ENCODE measurements at regions of chr10 and their contacts with region 1.

Region 1: DNA sequence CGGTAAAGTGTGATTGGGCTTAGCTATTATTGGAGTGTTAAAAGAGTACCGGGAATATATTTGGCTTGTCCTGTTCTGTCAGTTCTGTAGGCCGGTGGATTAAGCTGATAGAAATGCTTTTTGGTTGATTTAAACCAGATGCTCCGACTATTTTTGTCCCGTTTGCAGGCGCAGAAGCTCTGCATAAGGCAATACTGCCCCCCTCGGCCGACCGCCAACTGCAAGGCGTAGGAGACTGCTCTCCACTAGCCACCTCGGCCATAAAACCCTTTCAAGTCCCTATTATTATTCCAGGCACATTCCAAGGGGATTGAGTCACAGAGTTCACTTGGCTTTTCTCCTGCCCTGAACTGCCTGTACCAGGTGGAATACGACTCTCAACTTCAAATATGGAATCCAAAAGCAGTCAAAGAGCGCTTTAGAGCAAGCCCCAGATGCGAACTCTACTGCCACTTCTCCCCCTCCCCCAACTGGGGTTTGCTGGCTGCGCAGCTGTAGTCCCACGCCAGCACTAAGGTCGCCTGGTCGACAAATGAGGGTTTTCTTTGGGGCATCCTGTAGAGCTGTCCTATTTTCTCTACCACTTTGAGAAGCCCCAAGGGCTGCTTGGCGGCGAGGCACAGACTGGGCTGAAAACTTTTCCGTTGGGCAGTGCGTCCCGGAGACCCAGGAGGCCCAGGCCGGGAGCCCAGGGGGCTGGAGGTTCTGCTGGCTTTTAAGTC is 108.3 kb downstream of the REEP3 start:
- H3K4me3 ChIP-seq: peak overlapping the region; percentile 59
- H3K27ac ChIP-seq: peak overlapping the region; percentile 100
- H3K4me1 ChIP-seq: peaks cover 16% of the 10 kb centered on the region
- CTCF ChIP-seq: peak; percentile 92

Region 2: DNA sequence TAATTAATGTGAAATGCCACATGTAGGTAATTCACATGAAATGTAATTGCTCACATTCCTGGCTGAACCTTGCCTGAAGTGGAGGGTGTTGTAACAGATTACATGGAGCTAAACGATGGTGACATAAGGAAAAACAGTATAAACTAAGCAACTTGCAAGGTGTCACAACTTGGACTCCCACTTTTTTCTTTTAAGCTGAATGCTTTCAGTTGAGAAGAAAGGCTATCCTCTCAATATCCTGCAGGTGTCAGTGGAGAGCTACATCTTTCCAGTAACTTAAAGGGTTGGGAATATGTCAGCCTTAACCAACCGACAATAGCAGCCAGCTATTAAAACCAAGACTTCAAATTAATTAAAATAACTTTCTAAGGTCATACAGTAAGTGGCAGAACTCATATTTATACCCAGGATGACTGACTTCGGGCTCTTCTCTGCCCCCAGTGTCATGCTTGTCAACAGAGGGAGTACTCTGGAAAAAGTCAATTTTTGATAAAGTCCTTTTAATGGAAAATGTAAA is 462.7 kb before region 1 on chr10:
- CTCF ChIA-PET with region 1: interaction called, 16 read pairs
- POLR2A ChIA-PET with region 1: interaction called, 10 read pairs
- H3K4me3 ChIP-seq: no peak overlapping the region
- H3K27ac ChIP-seq: no peak overlapping the region
- H3K4me1 ChIP-seq: peaks cover 8% of the 10 kb centered on the region
- CTCF ChIP-seq: no peak; the same call in 1 of the 2 replicates

Region 3: DNA sequence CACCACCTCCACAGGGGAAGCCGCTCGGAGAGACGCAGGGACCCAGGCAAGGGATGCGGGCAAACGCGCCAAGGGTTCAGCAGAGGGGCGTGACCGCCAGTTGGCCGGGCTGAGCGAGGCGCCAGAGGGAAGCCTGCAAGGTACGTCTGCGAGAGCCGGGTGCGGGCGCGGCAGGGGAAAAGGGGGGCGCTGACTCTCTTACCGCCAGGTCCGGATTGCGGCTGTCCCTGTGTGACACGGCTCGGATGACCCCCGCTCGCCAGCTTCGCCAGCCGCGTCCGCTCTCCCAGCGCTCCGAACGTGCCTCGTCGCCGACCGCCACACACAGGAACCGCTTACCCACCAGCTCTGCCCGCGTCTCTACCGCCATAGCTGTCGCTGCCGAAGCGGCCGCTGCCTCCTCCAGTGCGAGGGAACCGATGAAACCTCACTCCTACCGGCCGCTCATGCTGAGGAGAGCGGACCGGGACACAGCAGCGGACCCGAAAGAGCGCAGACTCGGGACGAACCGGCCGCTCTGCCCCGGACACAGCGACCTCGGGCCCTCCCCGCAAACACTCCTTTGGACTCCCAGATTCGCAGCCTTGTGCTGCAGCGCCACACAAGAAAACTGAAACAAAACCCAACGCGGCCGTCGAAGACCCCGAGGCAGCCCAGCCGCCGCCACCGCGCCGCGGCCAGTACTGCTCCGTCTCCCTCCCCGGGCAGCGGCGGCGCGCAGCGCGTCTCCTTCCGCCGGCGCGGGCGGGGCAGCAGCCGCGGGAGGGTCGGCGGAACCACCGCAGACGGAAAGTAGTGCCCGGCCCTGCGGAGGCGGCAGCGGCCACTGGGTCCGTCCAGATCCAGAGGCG is 164.0 kb before region 1 on chr10 and contains the start of gene JMJD1C:
- CTCF ChIA-PET with region 1: interaction called, 5 read pairs
- POLR2A ChIA-PET with region 1: interaction called, 26 read pairs
- H3K4me3 ChIP-seq: peak within 1 kb of the TSS; percentile 98
- H3K27ac ChIP-seq: peak within 1 kb of the TSS; percentile 95
- H3K4me1 ChIP-seq: peaks cover 5% of the 10 kb centered on the region; the same call in 1 of the 2 replicates
- CTCF ChIP-seq: peak; percentile 93

Region 4: GRCh38 chr10:63497321-63497720 is 132.2 kb before region 1 on chr10:
- CTCF ChIA-PET with region 1: no interaction called
- POLR2A ChIA-PET with region 1: no interaction called
- H3K4me3 ChIP-seq: no peak overlapping the region
- H3K27ac ChIP-seq: no peak overlapping the region
- H3K4me1 ChIP-seq: peaks cover 3% of the 10 kb centered on the region
- CTCF ChIP-seq: no peak

Region 5: GRCh38 chr10:63521416-63522276 is 107.9 kb before region 1 on chr10:
- CTCF ChIA-PET with region 1: interaction called, 12 read pairs
- POLR2A ChIA-PET with region 1: interaction called, 25 read pairs
- H3K4me3 ChIP-seq: peak overlapping the region; percentile 95
- H3K27ac ChIP-seq: peak overlapping the region; percentile 99
- H3K4me1 ChIP-seq: peaks cover 13% of the 10 kb centered on the region
- CTCF ChIP-seq: peak; percentile 62

Region 6: GRCh38 chr10:63600540-63600939 is 29.0 kb before region 1 on chr10:
- CTCF ChIA-PET with region 1: no interaction called
- POLR2A ChIA-PET with region 1: no interaction called
- H3K4me3 ChIP-seq: no peak overlapping the region
- H3K27ac ChIP-seq: no peak overlapping the region
- H3K4me1 ChIP-seq: peaks cover 9% of the 10 kb centered on the region
- CTCF ChIP-seq: no peak

Region 7: DNA sequence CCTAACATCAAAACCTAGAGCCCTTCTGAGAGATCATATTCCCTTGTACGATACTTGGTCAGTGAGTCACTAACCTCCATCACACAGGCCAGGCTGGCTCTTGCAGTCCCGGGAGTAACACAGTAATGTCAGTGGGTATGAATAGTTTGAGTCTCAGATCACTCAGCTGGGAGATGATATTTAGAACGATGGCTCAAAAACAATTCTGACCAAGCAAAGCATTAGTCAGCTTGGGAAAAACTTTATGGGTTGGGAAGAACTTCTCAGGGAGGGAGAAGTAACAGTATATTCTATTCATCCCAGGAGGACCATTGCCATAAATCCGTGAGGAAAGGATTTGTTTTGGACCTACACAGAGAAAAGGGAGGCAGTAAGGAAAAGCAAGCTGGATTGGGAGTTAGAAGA is 70.7 kb after region 1 on chr10:
- CTCF ChIA-PET with region 1: interaction called, 5 read pairs
- POLR2A ChIA-PET with region 1: interaction called, 11 read pairs
- H3K4me3 ChIP-seq: no peak overlapping the region
- H3K27ac ChIP-seq: peak overlapping the region; percentile 61
- H3K4me1 ChIP-seq: peaks cover 18% of the 10 kb centered on the region
- CTCF ChIP-seq: no peak

Region 8: DNA sequence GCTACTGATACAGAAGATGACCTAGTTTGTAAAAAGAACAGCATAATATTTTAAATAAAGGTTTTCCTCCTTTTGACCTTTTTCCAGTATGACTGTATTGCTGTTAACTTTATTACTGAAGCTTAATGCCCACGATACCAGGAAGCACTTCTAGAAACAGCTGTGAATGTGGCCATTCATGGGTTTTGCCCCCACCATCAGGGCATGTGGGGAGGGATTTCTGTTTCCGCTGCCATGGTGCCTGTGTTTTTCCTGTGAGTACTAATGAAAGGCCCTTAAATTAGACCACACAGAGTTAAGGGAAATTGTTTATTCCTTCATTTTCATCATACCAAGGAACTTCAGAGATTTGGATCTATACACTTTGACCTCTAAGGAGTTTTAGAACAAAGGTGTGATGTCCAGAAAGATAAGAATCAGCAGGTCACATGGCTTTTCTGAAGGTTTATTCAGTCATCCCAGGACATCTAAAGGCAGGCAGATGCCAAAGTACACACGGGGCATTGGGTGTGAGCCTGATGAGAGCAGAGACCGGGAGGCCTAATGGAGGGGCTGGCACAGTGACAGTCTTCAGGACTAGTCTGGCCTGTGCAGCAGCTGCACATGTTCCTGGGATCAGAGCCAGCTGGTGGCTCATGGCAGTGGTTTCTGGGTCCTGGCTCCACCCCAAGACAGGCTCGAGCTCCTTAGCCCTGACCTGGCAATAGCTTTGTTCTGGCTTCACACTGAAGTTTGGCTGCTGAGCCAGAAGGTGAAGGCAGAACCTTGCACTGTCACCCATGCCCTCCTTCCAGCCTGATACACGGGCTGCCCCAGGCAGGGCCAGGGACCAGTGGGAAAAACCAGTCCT is 82.6 kb after region 1 on chr10:
- CTCF ChIA-PET with region 1: interaction called, 27 read pairs
- POLR2A ChIA-PET with region 1: interaction called, 25 read pairs
- H3K4me3 ChIP-seq: no peak overlapping the region
- H3K27ac ChIP-seq: peak overlapping the region; percentile 83
- H3K4me1 ChIP-seq: peaks cover 21% of the 10 kb centered on the region
- CTCF ChIP-seq: no peak; the same call in 1 of the 2 replicates